Naive thymus-derived CD4-positive, alpha-beta T cell (primary cell): ENCODE measurements at regions of chr4 and their contacts with region 1.

Region 1: DNA sequence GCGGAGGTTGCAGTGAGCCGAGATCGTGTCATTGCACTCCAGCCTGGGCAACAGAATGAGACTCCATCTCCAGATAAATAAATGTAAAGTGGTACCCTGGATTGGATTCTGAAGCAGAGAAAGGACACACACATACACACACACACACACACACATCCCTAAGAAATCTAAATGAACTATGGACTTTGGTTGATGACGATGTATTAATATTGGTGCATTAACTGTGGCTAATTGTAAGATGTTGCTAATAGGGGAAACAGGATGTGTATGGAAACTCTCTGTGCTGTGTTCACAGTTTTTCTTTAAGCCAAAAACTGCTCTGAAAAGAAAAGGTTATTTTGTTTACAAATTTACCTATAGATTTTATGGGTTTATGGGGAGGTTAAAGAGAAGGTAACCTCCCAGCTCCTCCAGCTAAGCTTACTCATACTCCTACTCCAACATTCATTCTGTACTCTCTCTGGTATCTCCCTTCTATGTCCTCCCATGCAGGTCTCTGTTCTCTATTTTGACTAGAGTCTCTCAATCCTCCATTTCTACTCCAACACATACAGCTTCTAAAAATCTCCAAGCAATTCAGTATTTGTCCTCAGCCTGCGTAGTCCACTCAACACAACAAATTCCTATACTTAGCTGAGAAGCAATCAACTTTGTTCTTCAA is 46.5 kb upstream of the RELL1 start:
- DNase-seq: no peak
- ATAC-seq: no peak
- H3K4me3 ChIP-seq: no peak overlapping the region
- H3K4me3 Mint-ChIP-seq: no peak overlapping the region
- H3K27ac ChIP-seq: no peak overlapping the region
- H3K27ac Mint-ChIP-seq: peak overlapping the region in 1 of 9 donors; percentile 10
- H3K4me1 ChIP-seq: no peaks in the 10 kb centered on the region
- H3K4me1 Mint-ChIP-seq: peaks cover 0 to 12% (median 1%) of the 10 kb centered on the region in 7 donors
- H3K27me3 ChIP-seq: no peaks in the 10 kb centered on the region
- H3K27me3 Mint-ChIP-seq: peaks cover 0 to 2% (median 0%) of the 10 kb centered on the region in 5 donors

Region 2: GRCh38 chr4:37721995-37722638 is 10.5 kb before region 1 on chr4:
- CTCF ChIA-PET with region 1: no interaction called
- POLR2A ChIA-PET with region 1: interaction called, 10 read pairs
- intact Hi-C with region 1: no loop called
- DNase-seq: peak in 4 of 9 donors; percentile 4 to 24 (median 12)
- ATAC-seq: peak; percentile 31
- H3K4me3 ChIP-seq: no peak overlapping the region
- H3K4me3 Mint-ChIP-seq: peak overlapping the region in 3 of 10 donors; percentile 20 to 29 (median 23)
- H3K27ac ChIP-seq: no peak overlapping the region
- H3K27ac Mint-ChIP-seq: peak overlapping the region in 6 of 9 donors; percentile 10 to 67 (median 32)
- H3K4me1 ChIP-seq: peaks cover 0 to 9% of the 10 kb centered on the region in 2 donors
- H3K4me1 Mint-ChIP-seq: peaks cover 5 to 22% (median 18%) of the 10 kb centered on the region in 7 donors
- H3K27me3 ChIP-seq: no peaks in the 10 kb centered on the region
- H3K27me3 Mint-ChIP-seq: peaks cover 0 to 3% (median 0%) of the 10 kb centered on the region in 5 donors